A549 (cell line): ENCODE measurements at regions of chr5 and their contacts with region 1.

Region 1: DNA sequence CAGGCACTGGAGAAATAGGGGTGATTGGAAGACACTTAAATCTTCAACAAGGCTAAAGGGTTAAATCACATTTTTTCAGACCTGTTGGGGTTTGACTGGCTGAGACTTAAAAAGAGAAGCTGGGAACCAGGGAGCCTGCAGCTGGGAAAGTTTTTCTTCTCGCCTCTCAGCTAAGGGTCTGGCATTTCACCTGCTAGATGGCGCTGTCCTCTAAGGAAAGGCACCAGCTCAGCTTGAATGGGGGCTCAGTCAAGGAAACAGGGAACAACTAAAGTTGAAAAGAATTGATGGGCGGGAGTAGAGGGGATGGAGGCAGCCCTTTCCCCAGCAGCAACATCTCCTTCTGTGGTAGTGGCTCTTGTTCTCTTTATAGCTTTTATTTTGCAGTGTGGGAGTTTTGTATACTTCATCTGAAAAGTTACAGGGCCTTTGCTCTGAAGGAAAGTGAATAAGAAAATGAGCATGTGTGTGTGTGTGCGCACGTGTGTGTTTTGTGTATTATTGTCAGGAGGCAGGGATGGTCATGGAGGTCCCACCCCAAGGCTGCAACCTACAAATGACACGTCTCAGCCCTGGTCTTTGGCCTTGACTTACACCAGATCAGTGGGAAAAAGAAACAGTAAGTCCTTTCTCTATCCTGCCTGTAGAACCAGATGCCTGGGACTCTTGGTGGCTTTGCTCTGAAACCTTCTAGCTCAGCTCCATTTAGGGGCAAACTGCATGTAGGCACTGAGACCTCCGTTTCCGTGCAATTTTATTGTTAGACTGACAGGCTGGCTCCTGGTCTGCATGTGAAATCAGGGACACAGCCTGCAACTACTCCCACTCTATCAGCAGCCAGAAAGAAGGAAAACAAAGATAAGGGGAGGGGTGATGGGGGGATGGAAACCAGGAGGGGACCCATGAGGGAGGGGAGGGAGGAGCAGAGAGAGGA is 316.2 kb upstream of the CLINT1 start:
- DNase-seq: peak; percentile 59 to 63
- ATAC-seq: peak; percentile 76 to 95
- H3K4me3 ChIP-seq: no peak overlapping the region
- H3K27ac ChIP-seq: no peak overlapping the region
- H3K4me1 ChIP-seq: no peaks in the 10 kb centered on the region
- CTCF ChIP-seq: peak; percentile 67
- EP300 ChIP-seq: no peak
- POLR2A ChIP-seq: no peak
- RAD21 ChIP-seq: peak; percentile 82 to 92

Region 2: DNA sequence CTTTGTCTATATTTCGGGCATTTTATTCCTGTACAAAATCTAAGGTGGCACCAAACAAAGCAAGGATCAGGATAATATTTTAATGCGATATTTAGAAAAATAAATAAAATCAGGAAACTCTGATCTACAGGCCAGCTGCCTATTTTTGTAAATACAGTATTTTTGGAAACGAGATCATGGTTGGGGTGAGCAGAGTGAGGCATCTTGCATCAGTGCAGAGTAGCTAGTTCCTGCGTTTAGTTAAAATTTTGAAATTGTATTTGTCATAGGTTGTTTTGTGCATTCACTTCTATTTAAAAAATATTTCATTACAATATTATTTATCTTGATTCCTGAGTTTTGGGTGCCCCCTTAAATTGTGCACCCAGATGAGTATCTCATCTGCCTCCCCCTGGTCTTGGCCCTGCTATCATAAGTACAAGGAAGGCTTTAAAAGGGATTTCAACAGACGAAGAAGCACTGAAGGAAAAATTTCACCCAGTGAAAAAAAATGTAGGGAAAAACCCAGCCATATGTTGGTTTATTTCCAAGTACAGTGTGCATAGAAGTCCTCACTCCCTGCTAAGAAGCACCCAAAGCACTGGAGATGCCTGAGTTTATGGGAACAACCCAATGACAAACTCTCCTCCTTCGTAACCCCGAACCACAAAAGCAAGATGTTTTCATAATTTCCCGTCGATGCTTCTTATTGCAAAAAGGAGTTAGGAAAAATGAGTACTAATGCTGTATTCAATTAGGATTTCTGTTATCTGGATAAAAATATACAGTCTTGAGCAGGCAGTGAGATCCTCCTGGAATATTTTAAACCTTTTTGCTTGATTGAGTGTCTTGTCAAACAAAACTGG is 11.5 kb before region 1 on chr5:
- CTCF ChIA-PET with region 1: interaction called, 18 read pairs
- POLR2A ChIA-PET with region 1: no interaction called
- DNase-seq: no peak
- ATAC-seq: no peak
- H3K4me3 ChIP-seq: no peak overlapping the region
- H3K27ac ChIP-seq: no peak overlapping the region
- H3K4me1 ChIP-seq: no peaks in the 10 kb centered on the region
- CTCF ChIP-seq: no peak
- EP300 ChIP-seq: no peak
- POLR2A ChIP-seq: no peak
- RAD21 ChIP-seq: no peak

Region 3: DNA sequence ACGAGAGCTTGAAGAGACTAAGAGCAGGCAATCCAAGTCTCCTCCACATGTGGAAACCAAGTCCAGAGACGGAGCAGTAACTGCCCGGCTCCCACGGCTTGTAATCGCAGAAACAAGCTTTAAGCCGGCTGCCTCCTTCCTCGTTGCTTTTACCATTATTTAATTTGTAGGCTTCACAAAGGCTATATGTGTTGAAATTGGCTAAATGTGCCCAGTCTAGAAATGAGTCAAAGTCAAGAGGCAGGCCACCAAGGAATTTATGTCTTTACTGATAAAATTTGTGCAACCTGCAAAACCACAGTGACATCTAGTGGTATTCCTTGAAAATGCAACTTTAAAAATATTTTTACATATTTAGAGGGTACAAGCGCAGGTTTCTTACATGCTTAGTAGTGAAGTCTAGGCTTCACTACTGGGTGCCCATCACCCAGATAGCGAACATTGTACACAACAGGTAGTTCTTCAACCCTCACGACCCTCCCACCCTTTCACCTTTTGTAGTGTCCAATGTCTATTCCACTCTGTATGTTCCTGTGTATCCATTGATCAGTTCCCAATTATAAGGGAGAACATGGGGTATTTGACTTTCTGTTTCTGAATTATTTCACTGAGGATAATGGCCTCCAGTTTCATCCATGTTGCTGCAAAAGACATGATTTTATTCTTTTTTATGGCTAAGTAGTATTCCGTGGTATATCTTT is 958.0 kb after region 1 on chr5:
- CTCF ChIA-PET with region 1: interaction called, 10 read pairs
- POLR2A ChIA-PET with region 1: no interaction called
- DNase-seq: peak; percentile 25 to 65
- ATAC-seq: peak; percentile 61 to 78
- H3K4me3 ChIP-seq: no peak overlapping the region
- H3K27ac ChIP-seq: peak overlapping the region; percentile 4 to 29; a peak in 1 of 6 replicates
- H3K4me1 ChIP-seq: peaks cover 25% of the 10 kb centered on the region
- CTCF ChIP-seq: peak; percentile 93
- EP300 ChIP-seq: no peak
- POLR2A ChIP-seq: no peak
- RAD21 ChIP-seq: peak; percentile 92 to 93